HCT116 (cell line): ENCODE measurements at regions of chrX and their contacts with region 1.

Region 1: DNA sequence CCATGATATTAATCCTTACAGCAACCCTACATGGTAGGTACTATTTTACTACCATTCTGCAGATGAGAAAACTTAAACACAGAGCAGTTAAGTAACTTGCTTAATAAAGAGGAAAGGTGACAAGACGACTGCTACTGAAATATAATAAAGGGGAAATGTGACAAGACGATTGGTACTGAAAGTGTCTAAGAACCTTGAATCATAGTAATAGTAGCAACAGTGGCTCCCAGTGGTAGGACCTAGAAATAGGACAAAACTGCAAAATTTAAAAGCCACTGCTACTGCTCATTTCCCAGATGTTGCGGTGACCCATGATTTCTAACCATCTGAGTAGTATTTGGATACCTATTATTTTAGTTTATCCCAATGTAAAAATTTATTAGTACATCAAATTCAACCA is 89.5 kb downstream of the TASL start:
- DNase-seq: peak; percentile 4
- ATAC-seq: peak; percentile 54; the same call in 1 of the 2 replicates
- H3K4me3 ChIP-seq: no peak overlapping the region
- H3K27ac ChIP-seq: no peak overlapping the region
- H3K4me1 ChIP-seq: no peaks in the 10 kb centered on the region
- H3K27me3 ChIP-seq: no peaks in the 10 kb centered on the region
- CTCF ChIP-seq: peak; percentile 16 to 39 (median 27); a peak in 3 of 6 replicates
- POLR2A ChIP-seq: no peak
- RAD21 ChIP-seq: peak; percentile 52

Region 2: DNA sequence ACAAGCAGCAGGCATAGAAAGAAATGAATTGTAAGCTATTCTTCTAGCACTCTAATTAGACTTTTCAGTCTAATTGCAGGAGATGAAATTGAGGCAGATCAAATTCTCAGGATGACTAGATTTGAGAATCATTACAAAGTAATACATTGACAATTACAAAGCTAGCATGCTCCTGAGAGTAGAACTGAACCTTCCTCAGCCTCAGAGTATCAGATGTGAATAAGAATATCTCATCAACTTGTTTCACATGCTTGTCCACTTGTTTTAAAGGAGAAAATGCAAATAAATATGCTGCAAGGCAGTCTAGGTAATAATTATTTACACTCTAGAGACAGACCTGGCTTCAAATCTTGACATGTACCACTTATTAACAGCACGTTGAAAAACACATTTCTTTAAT is 763.8 kb before region 1 on chrX:
- CTCF ChIA-PET with region 1: no interaction called
- POLR2A ChIA-PET with region 1: no interaction called
- RAD21 ChIA-PET with region 1: no interaction called
- intact Hi-C with region 1: no loop called
- DNase-seq: no peak
- ATAC-seq: no peak
- H3K4me3 ChIP-seq: no peak overlapping the region
- H3K27ac ChIP-seq: no peak overlapping the region
- H3K4me1 ChIP-seq: no peaks in the 10 kb centered on the region
- H3K27me3 ChIP-seq: no peaks in the 10 kb centered on the region
- CTCF ChIP-seq: no peak
- POLR2A ChIP-seq: no peak
- RAD21 ChIP-seq: no peak

Region 3: GRCh38 chrX:29834764-29835163 is 653.3 kb before region 1 on chrX:
- CTCF ChIA-PET with region 1: no interaction called
- POLR2A ChIA-PET with region 1: no interaction called
- RAD21 ChIA-PET with region 1: no interaction called
- intact Hi-C with region 1: no loop called
- DNase-seq: no peak
- ATAC-seq: no peak
- H3K4me3 ChIP-seq: no peak overlapping the region
- H3K27ac ChIP-seq: no peak overlapping the region
- H3K4me1 ChIP-seq: no peaks in the 10 kb centered on the region
- H3K27me3 ChIP-seq: no peaks in the 10 kb centered on the region
- CTCF ChIP-seq: no peak
- POLR2A ChIP-seq: no peak
- RAD21 ChIP-seq: no peak

Region 4: DNA sequence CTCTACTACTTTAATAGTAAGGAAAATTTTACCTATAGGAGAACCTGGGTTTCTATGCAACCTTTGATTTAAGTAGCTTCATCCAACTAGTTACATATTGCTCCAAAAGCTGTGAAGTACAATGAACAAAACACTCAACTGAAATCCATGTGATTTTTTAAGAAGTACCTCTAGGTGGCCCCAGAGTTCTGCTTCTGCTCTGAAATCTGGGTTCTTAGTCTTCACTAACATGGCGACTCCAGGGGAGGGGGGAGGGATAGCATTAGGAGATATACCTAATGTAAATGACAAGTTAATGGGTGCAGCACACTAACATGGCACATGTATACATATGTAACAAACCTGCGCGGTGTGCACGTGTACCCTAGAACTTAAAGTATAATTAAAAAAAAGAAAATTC is 346.1 kb before region 1 on chrX:
- CTCF ChIA-PET with region 1: no interaction called
- POLR2A ChIA-PET with region 1: no interaction called
- RAD21 ChIA-PET with region 1: no interaction called
- intact Hi-C with region 1: loop called (anchors 2 kb)
- DNase-seq: peak; percentile 43
- ATAC-seq: peak; percentile 77
- H3K4me3 ChIP-seq: no peak overlapping the region
- H3K27ac ChIP-seq: no peak overlapping the region
- H3K4me1 ChIP-seq: no peaks in the 10 kb centered on the region
- H3K27me3 ChIP-seq: no peaks in the 10 kb centered on the region
- CTCF ChIP-seq: peak; percentile 36 to 43 (median 39); a peak in 5 of 6 replicates
- POLR2A ChIP-seq: no peak
- RAD21 ChIP-seq: peak; percentile 63

Region 5: GRCh38 chrX:30343203-30343602 is 144.9 kb before region 1 on chrX:
- CTCF ChIA-PET with region 1: no interaction called
- POLR2A ChIA-PET with region 1: no interaction called
- RAD21 ChIA-PET with region 1: no interaction called
- intact Hi-C with region 1: loop called (anchors 2 kb)
- DNase-seq: no peak
- ATAC-seq: peak; percentile 74
- H3K4me3 ChIP-seq: no peak overlapping the region
- H3K27ac ChIP-seq: no peak overlapping the region
- H3K4me1 ChIP-seq: no peaks in the 10 kb centered on the region
- H3K27me3 ChIP-seq: no peaks in the 10 kb centered on the region
- CTCF ChIP-seq: peak in 2 of 3 experiments; percentile 24 to 28; a peak in 3 of 6 replicates
- POLR2A ChIP-seq: no peak
- RAD21 ChIP-seq: 0 out of 2 replicates have a peak, but pooled peaks have one; percentile 19